ENCODE measurements at regions of chr1 and their contacts with region 1.

Region 1: DNA sequence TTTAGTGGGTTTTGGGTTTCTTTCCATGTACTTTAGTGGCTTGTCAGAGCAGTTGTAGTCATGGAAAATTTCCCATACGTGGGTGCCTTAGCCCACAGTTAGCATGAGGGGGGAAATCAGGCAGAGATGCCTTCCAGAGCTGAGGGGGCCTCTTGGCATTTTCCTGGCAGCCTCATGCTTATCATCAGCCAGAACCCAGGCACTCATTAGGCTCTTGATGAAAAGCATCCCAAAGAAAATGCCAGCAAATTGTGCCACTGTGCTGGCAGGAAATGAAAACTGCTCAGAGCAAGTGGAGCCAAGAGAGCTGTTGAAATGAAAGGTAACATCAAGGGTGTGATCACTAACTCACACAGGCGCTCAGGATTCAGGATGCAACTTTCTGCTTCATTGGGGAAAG is 128.0 kb downstream of the TNNI3K start:
- DNase-seq: peak in 4 of 5 donors; percentile 66 to 88 (median 76)
- ATAC-seq: peak; percentile 93 to 97 (median 95)
- H3K4me3 ChIP-seq: no peak overlapping the region
- H3K27ac ChIP-seq: peak overlapping the region in 11 of 12 donors; percentile 33 to 92 (median 75)
- H3K4me1 ChIP-seq: peaks cover 0 to 15% (median 1%) of the 10 kb centered on the region in 12 donors
- H3K27me3 ChIP-seq: no peaks in the 10 kb centered on the region
- CTCF ChIP-seq: no peak
- POLR2A ChIP-seq: no peak

Region 2: DNA sequence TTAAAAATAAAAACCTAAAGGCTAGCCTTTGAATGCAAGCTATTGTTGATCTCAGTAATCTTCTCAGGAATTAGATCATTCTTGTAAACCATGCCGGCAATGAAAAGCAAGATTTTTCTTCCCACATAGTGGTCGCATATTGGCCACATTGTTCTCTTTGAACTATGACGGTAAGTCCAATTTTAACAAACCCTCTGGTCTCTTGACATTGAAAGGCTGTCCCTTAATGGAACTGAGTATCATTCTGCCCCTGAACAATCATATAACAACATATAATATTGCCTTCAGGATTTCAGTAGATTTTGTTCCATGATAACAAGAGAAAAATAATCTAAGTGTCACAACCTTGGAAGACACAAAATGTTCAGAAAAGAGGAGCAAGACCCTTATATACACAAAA is 126.8 kb before region 1 on chr1:
- intact Hi-C with region 1: loop called in 1 of 10 experiments (anchors 5 kb)
- DNase-seq: no peak
- ATAC-seq: peak in 3 of 4 donors; percentile 47 to 51 (median 51)
- H3K4me3 ChIP-seq: peak overlapping the region; percentile 2 to 57 (median 44)
- H3K27ac ChIP-seq: peak overlapping the region; percentile 11 to 84 (median 68)
- H3K4me1 ChIP-seq: no peaks in the 10 kb centered on the region
- H3K27me3 ChIP-seq: no peaks in the 10 kb centered on the region
- CTCF ChIP-seq: no peak
- POLR2A ChIP-seq: no peak

Region 3: GRCh38 chr1:74689621-74690363 is 326.6 kb after region 1 on chr1:
- intact Hi-C with region 1: no loop called
- DNase-seq: peak in 2 of 5 donors; percentile 10 to 21
- ATAC-seq: peak in 1 of 4 donors; percentile 38
- H3K4me3 ChIP-seq: no peak overlapping the region
- H3K27ac ChIP-seq: no peak overlapping the region
- H3K4me1 ChIP-seq: no peaks in the 10 kb centered on the region
- H3K27me3 ChIP-seq: no peaks in the 10 kb centered on the region
- CTCF ChIP-seq: peak; percentile 72 to 88 (median 76)
- POLR2A ChIP-seq: no peak